ENCODE measurements at regions of chr17 and their contacts with region 1.

Region 1: DNA sequence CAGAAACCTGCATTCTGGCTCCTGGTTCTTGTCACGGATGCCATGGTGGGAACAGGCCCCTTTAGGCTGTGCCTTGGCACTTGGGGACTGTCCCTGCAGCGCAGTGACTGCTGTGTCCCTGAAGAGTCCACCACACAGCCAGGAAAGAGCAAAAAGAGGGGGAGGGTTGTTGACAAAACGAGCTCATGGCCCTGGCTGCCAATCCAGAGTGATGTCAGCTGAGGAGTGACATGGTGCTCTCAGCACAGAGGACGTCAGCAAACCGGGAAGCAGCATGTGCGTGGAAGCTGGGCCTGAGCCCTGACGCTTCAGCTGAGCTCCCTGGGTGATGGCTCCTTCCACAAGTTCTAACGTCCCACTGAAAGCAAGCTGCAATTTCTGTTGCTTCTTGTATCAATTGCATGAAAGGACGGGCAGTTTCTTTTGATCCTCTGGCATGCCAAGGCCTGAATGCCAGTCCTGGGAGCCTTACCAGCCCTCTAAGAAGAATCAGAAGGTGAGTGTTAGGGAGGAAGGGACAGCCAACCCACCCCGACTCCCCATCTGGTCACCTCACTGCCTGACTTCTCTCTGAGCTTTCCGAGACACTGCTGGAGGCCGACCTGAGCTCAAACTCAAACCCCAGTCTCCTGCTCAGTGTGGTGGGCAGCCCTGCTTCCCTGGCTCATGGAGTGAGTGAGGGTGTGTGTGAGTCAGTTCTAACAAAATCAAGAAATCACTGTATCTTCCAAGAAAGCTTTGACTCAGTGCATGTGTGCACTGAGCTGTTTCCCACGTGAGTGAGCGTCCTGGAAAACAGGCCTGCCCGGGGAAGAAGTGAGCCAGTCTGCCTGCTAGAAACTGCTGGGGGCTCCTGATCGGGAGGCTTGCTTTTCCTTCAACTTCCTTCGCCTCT is 14.7 kb upstream of the WNT3 start:
- DNase-seq: no peak
- H3K4me3 Mint-ChIP-seq: no peak overlapping the region
- H3K27ac Mint-ChIP-seq: no peak overlapping the region
- H3K4me1 Mint-ChIP-seq: no peaks in the 10 kb centered on the region
- H3K27me3 Mint-ChIP-seq: peaks cover 78% of the 10 kb centered on the region

Region 2: GRCh38 chr17:46822388-46822921 is 10.7 kb before region 1 on chr17:
- CTCF ChIA-PET with region 1: interaction called, 32 read pairs
- DNase-seq: peak; percentile 50
- H3K4me3 Mint-ChIP-seq: no peak overlapping the region
- H3K27ac Mint-ChIP-seq: no peak overlapping the region
- H3K4me1 Mint-ChIP-seq: peaks cover 16% of the 10 kb centered on the region
- H3K27me3 Mint-ChIP-seq: peaks cover 96% of the 10 kb centered on the region

Region 3: GRCh38 chr17:46940621-46941404 is 107.6 kb after region 1 on chr17:
- CTCF ChIA-PET with region 1: no interaction called
- DNase-seq: peak; percentile 83
- H3K4me3 Mint-ChIP-seq: no peak overlapping the region
- H3K27ac Mint-ChIP-seq: no peak overlapping the region
- H3K4me1 Mint-ChIP-seq: peaks cover 17% of the 10 kb centered on the region
- H3K27me3 Mint-ChIP-seq: no peaks in the 10 kb centered on the region